ENCODE measurements at regions of chr6 and their contacts with region 1.

Region 1: DNA sequence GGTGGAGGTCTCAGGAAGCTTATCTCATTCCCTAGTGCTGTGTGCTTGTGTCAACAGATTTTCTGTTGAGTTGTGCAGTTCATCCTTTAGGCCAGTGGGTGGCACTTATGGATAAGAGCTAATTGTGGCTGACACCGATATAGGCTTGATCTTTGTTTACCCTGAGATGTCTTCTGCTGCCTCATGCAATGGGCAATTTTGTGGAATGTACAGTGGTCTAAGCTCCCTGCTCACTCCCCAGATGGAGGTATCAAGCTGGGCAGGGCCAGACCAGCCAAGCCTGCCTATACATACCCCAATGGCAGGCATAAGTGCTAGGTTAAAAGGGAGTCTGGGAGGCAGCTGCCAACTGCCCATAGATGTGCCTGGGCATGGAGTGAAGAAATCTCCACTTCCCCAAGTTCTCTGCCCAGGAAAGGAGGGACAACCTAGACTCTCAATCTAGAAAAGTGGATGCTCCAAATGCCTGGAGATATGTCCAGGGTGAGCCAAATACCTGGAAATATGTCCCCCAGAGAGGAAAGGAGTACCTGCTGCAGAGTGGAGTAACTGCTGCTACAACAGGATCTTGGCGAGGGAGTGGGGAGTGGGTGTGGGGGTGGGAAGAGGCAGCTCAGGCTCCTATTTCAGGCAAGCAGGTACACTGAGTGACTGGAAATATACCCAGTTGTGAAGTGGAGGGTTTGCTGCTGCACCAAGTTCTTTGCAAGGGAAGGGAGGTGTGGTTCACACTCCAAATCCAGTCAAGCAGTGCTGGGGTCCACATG is 53.2 kb upstream of the ARG1 start:
- DNase-seq: peak in 7 of 9 experiments; percentile 22 to 72 (median 48)
- ATAC-seq: peak; percentile 97
- H3K4me3 ChIP-seq: no peak overlapping the region
- H3K4me3 Mint-ChIP-seq: no peak overlapping the region
- H3K27ac ChIP-seq: no peak overlapping the region
- H3K27ac Mint-ChIP-seq: no peak overlapping the region
- H3K4me1 ChIP-seq: peaks cover 13% of the 10 kb centered on the region
- H3K4me1 Mint-ChIP-seq: peaks cover 17% of the 10 kb centered on the region
- H3K27me3 ChIP-seq: no peaks in the 10 kb centered on the region
- H3K27me3 Mint-ChIP-seq: no peaks in the 10 kb centered on the region
- CTCF ChIP-seq: peak; percentile 71

Region 2: DNA sequence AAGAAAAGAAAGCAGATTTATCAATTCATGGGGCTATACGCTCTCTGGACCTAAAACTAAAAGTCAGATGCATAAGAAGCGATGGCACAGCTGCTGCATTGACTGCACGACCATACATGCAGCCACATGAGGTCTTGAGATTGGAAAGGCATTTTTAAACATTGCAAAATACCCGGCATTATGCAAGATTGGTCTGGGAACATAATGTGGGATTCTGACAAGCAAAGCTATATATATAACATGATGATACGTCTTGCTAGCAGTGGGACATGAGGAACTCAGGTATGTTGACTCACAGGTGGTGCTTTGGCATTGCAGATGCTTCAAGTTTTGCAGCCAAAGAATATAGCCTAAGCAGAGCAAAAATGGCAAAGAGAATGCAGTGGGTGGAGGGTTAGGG is 1352.2 kb before region 1 on chr6:
- CTCF ChIA-PET with region 1: no interaction called
- POLR2A ChIA-PET with region 1: no interaction called
- intact Hi-C with region 1: no loop called
- DNase-seq: no peak
- ATAC-seq: no peak
- H3K4me3 ChIP-seq: no peak overlapping the region
- H3K4me3 Mint-ChIP-seq: no peak overlapping the region
- H3K27ac ChIP-seq: no peak overlapping the region
- H3K27ac Mint-ChIP-seq: no peak overlapping the region
- H3K4me1 ChIP-seq: no peaks in the 10 kb centered on the region
- H3K4me1 Mint-ChIP-seq: peaks cover 28% of the 10 kb centered on the region
- H3K27me3 ChIP-seq: no peaks in the 10 kb centered on the region
- H3K27me3 Mint-ChIP-seq: no peaks in the 10 kb centered on the region
- CTCF ChIP-seq: no peak

Region 3: DNA sequence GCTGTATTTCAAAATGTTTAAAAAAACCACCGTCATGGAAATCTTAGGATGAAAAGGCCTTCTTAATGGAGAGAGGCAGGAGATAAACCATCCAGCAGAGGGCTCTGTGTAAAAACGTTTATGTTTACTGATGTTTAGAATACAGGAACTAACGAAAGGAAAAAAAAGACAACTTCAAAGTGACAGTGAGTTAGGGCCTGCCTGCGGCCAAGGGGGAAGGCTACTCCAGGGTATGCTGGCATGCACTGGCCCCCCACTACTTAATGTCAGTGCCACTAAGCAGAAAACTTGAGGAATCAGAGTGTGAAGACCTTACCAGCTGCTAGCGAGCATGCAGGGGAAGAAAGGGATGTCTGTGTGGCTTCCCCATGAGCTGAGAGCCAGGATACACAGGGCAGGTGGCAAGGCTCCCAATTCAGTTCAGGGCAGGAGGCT is 336.8 kb before region 1 on chr6:
- CTCF ChIA-PET with region 1: interaction called, 14 read pairs
- POLR2A ChIA-PET with region 1: no interaction called
- intact Hi-C with region 1: no loop called
- DNase-seq: peak in 6 of 9 experiments; percentile 9 to 68 (median 40)
- ATAC-seq: peak; percentile 66
- H3K4me3 ChIP-seq: no peak overlapping the region
- H3K4me3 Mint-ChIP-seq: peak overlapping the region; percentile 69
- H3K27ac ChIP-seq: peak overlapping the region in 1 of 2 experiments; percentile 23
- H3K27ac Mint-ChIP-seq: peak overlapping the region; percentile 89
- H3K4me1 ChIP-seq: peaks cover 11% of the 10 kb centered on the region
- H3K4me1 Mint-ChIP-seq: peaks cover 13% of the 10 kb centered on the region
- H3K27me3 ChIP-seq: no peaks in the 10 kb centered on the region
- H3K27me3 Mint-ChIP-seq: no peaks in the 10 kb centered on the region
- CTCF ChIP-seq: peak; percentile 63

Region 4: DNA sequence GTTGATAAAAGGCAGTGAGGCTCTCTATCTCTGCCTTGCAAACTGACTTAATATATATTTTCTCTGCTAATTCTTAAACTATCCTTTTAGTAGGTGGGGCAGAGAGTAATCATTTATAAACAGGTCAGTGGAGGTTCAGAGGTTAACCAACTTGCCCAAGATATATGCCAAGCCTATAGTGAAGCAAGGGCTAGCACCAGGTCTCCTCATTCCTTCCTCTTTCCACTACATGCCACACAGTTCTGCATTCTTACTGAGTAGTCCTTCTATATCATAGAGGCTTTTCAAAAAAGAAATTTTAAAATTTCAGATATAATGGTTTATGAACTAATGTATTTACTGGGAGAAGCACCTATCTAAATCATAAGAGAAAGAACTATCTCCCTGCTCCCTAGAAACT is 61.7 kb after region 1 on chr6:
- CTCF ChIA-PET with region 1: no interaction called
- POLR2A ChIA-PET with region 1: no interaction called
- intact Hi-C with region 1: no loop called
- DNase-seq: no peak
- ATAC-seq: no peak
- H3K4me3 ChIP-seq: no peak overlapping the region
- H3K4me3 Mint-ChIP-seq: no peak overlapping the region
- H3K27ac ChIP-seq: no peak overlapping the region
- H3K27ac Mint-ChIP-seq: no peak overlapping the region
- H3K4me1 ChIP-seq: no peaks in the 10 kb centered on the region
- H3K4me1 Mint-ChIP-seq: no peaks in the 10 kb centered on the region
- H3K27me3 ChIP-seq: no peaks in the 10 kb centered on the region
- H3K27me3 Mint-ChIP-seq: no peaks in the 10 kb centered on the region
- CTCF ChIP-seq: no peak

Region 5: GRCh38 chr6:131660195-131660594 is 140.3 kb after region 1 on chr6:
- CTCF ChIA-PET with region 1: no interaction called
- POLR2A ChIA-PET with region 1: no interaction called
- intact Hi-C with region 1: no loop called
- DNase-seq: no peak
- ATAC-seq: no peak
- H3K4me3 ChIP-seq: no peak overlapping the region
- H3K4me3 Mint-ChIP-seq: no peak overlapping the region
- H3K27ac ChIP-seq: no peak overlapping the region
- H3K27ac Mint-ChIP-seq: no peak overlapping the region
- H3K4me1 ChIP-seq: no peaks in the 10 kb centered on the region
- H3K4me1 Mint-ChIP-seq: no peaks in the 10 kb centered on the region
- H3K27me3 ChIP-seq: no peaks in the 10 kb centered on the region
- H3K27me3 Mint-ChIP-seq: no peaks in the 10 kb centered on the region
- CTCF ChIP-seq: no peak

Measured in CD8-positive, alpha-beta T cell (primary cell).